HCT116 (cell line): ENCODE measurements at regions of chr6 and their contacts with region 1.

Region 1: GRCh38 chr6:130020907-130021629 is 2.7 kb downstream of the L3MBTL3 start:
- DNase-seq: peak; percentile 85
- ATAC-seq: peak; percentile 65
- H3K4me3 ChIP-seq: peak overlapping the region; percentile 64 to 72
- H3K27ac ChIP-seq: peak overlapping the region; percentile 93
- H3K4me1 ChIP-seq: peaks cover 12 to 13% of the 10 kb centered on the region in 2 experiments; a peak in 3 of 4 replicates
- H3K27me3 ChIP-seq: no peaks in the 10 kb centered on the region
- CTCF ChIP-seq: peak; percentile 61 to 83 (median 81); a peak in 5 of 6 replicates
- POLR2A ChIP-seq: no peak
- RAD21 ChIP-seq: peak; percentile 91

Region 2: DNA sequence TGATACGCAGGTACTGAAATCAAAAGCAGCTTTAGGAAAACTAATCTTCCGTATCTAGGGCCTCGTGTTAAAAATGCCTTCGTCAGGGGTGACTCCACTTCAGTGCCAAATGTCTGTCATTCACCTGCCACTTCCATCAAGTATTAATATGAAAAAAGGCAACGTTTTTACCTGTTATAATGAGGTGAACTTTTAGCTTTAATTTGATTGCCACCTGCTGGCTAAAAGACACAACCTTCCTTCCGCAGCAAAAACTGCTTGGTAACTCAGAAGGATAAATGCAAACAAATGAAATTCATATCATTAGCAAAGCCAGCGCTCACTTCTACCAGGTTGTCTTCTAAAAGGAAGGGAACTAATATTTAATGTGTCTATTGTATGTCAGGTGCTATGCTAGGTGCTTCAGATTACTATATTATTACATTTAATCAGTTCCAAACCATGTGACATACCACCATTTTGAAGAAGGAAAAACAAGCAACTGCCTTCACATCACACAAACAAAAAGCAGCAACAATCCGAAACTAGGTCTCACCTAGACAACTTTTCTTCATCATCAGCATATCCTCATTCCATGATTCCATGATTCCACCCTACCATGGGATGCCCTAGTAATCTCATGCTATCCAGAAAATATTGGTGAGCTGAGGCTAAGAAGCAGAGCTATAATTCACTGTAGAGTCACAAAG is 290.4 kb before region 1 on chr6:
- CTCF ChIA-PET with region 1: interaction called, 3 read pairs
- POLR2A ChIA-PET with region 1: no interaction called
- RAD21 ChIA-PET with region 1: no interaction called
- intact Hi-C with region 1: loop called (anchors 5 kb)
- DNase-seq: no peak
- ATAC-seq: peak; percentile 62
- H3K4me3 ChIP-seq: no peak overlapping the region
- H3K27ac ChIP-seq: peak overlapping the region; percentile 52
- H3K4me1 ChIP-seq: peaks cover 27 to 38% of the 10 kb centered on the region in 2 experiments
- H3K27me3 ChIP-seq: no peaks in the 10 kb centered on the region
- CTCF ChIP-seq: peak; percentile 60 to 85 (median 71)
- POLR2A ChIP-seq: no peak
- RAD21 ChIP-seq: peak; percentile 96

Region 3: DNA sequence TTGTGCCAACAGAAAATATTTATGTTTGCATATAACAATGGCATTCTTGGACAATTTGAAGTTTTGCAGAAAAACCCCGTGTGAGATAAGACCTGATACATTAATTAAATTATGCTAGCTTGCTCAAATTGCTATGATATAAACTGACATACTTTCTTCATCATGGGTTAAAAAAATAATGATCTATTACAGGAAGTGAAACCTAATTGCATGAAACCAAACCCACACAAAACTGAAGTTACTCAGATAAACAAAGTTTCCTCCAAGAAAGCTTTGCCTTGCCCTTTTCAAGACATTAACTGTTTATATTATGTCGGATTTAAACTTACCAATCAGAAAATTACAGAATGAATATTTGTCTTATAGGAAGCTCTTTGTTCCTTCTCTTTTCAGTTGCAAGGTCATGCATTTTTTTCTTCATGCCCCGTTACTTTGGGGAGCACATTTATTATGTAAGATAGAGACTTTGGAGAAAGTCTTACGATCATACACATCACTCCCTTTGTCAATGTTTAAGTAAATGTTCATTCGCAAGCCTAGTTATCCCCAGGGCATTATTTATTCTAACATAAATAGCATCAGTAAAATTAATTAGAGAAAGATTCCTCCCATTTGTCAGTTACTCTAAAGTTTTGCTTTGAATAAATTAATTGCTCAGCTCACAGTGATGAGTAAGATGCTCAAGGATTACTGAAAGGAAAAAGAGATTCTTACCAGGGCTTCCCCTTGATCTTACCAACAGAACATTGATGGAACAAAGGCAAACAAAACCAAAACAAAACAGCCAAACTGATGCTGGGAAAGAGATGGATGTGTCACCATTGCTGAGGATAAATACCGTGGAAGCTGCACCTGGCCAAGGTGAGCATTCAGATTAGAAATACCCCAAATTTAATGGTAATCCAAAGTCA is 145.2 kb before region 1 on chr6:
- CTCF ChIA-PET with region 1: no interaction called
- POLR2A ChIA-PET with region 1: no interaction called
- RAD21 ChIA-PET with region 1: no interaction called
- intact Hi-C with region 1: no loop called
- DNase-seq: no peak
- ATAC-seq: no peak
- H3K4me3 ChIP-seq: no peak overlapping the region
- H3K27ac ChIP-seq: no peak overlapping the region
- H3K4me1 ChIP-seq: no peaks in the 10 kb centered on the region
- H3K27me3 ChIP-seq: no peaks in the 10 kb centered on the region
- CTCF ChIP-seq: no peak
- POLR2A ChIP-seq: no peak
- RAD21 ChIP-seq: no peak

Region 4: DNA sequence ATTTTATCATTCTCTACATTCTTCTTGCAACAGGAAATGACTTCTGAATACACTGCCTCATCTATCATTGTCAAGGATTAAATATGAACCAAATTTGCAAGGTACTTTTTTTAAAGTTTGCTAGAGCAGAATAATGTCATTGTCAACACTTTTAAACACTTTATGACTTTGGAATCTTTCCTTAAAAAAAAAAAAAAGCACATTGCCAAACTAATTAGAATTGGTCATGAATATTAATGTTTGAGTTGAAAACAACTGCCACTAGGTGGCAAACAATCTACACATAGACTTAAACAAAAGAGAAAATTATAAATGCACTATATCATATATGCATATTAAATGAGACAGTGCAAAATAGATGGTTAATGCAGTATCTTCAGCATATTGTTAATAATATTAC is 127.4 kb before region 1 on chr6:
- CTCF ChIA-PET with region 1: no interaction called
- POLR2A ChIA-PET with region 1: no interaction called
- RAD21 ChIA-PET with region 1: no interaction called
- intact Hi-C with region 1: loop called (anchors 2 kb)
- DNase-seq: no peak
- ATAC-seq: no peak
- H3K4me3 ChIP-seq: no peak overlapping the region
- H3K27ac ChIP-seq: no peak overlapping the region
- H3K4me1 ChIP-seq: peaks cover 14 to 23% of the 10 kb centered on the region in 2 experiments
- H3K27me3 ChIP-seq: no peaks in the 10 kb centered on the region
- CTCF ChIP-seq: peak; percentile 20 to 64 (median 42); a peak in 3 of 6 replicates
- POLR2A ChIP-seq: no peak
- RAD21 ChIP-seq: peak; percentile 57

Region 5: GRCh38 chr6:130037207-130037811 is 16.2 kb after region 1 on chr6:
- CTCF ChIA-PET with region 1: interaction called, 15 read pairs
- POLR2A ChIA-PET with region 1: no interaction called
- RAD21 ChIA-PET with region 1: no interaction called
- intact Hi-C with region 1: no loop called
- DNase-seq: no peak
- ATAC-seq: no peak
- H3K4me3 ChIP-seq: no peak overlapping the region
- H3K27ac ChIP-seq: no peak overlapping the region
- H3K4me1 ChIP-seq: peaks cover 23 to 26% of the 10 kb centered on the region in 2 experiments
- H3K27me3 ChIP-seq: no peaks in the 10 kb centered on the region
- CTCF ChIP-seq: peak; percentile 35 to 67 (median 39); a peak in 4 of 6 replicates
- POLR2A ChIP-seq: no peak
- RAD21 ChIP-seq: peak; percentile 37; the same call in 1 of the 2 replicates

Region 6: GRCh38 chr6:130565696-130566095 is 544.6 kb after region 1 on chr6:
- CTCF ChIA-PET with region 1: no interaction called
- POLR2A ChIA-PET with region 1: no interaction called
- RAD21 ChIA-PET with region 1: no interaction called
- intact Hi-C with region 1: no loop called
- DNase-seq: no peak
- ATAC-seq: no peak
- H3K4me3 ChIP-seq: no peak overlapping the region
- H3K27ac ChIP-seq: no peak overlapping the region
- H3K4me1 ChIP-seq: no peaks in the 10 kb centered on the region
- H3K27me3 ChIP-seq: no peaks in the 10 kb centered on the region
- CTCF ChIP-seq: no peak
- POLR2A ChIP-seq: no peak
- RAD21 ChIP-seq: no peak